Activated CD8-positive, alpha-beta T cell treated with anti-CD3 and anti-CD28 coated beads for 36 hours (primary cell): ENCODE measurements at regions of chr1 and their contacts with region 1.

Region 1: DNA sequence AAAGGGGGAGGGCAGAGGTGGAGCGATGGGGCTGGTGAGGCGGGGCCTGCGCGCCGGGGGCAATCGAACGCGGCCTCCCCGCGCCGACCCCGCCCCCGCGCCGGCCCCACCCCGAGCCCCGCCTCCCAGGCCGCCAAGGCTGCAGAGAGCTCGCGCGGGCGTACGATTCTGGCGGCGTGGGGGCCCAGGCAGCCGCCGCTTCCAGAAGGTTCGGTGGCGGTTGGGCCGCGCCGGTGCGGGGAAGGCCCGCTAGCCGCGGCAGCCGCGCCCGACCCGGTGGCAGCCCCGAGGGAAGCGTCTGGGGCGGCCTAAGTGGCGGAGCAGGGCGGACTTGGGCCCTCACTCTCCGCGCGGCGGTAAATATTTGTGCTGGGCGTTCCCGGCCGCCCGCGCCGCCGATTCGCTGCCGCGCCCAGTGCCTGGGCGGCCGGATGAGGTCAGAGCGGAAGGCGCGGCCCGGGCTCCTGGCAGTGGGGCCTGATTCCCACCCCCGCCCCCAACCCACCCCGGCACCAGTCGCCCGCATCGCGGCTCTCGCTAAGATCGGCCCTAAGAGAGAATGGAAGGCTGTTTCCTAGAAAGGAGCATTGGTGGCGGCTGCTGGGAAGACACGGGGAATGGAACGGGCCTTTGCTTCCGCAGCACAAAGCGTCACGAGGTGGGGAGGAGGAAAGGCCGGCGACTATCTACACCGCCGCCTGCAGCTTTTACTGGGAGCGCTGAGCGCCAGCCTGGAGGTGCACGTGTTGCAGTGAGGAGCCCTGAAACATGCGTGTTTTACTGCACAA is at the start of gene ACOT7:
- DNase-seq: peak; percentile 94
- ATAC-seq: peak; percentile 91
- H3K4me3 Mint-ChIP-seq: peak within 1 kb of the TSS; percentile 84
- H3K27ac Mint-ChIP-seq: peak within 1 kb of the TSS; percentile 95
- H3K4me1 Mint-ChIP-seq: peaks cover 21% of the 10 kb centered on the region
- H3K27me3 Mint-ChIP-seq: no peaks in the 10 kb centered on the region
- CTCF ChIP-seq: no peak
- total RNA-seq, gene ACOT7: 80.4 to 86.7 TPM

Region 2: GRCh38 chr1:6367381-6368012 is 26.1 kb before region 1 on chr1:
- CTCF ChIA-PET with region 1: interaction called, 30 read pairs
- POLR2A ChIA-PET with region 1: interaction called, 13 read pairs
- intact Hi-C with region 1: no loop called
- DNase-seq: no peak
- ATAC-seq: no peak
- H3K4me3 Mint-ChIP-seq: no peak overlapping the region
- H3K27ac Mint-ChIP-seq: no peak overlapping the region
- H3K4me1 Mint-ChIP-seq: peaks cover 24% of the 10 kb centered on the region
- H3K27me3 Mint-ChIP-seq: no peaks in the 10 kb centered on the region
- CTCF ChIP-seq: no peak

Region 3: GRCh38 chr1:6584126-6585080 is 190.8 kb after region 1 on chr1:
- CTCF ChIA-PET with region 1: no interaction called
- POLR2A ChIA-PET with region 1: no interaction called
- intact Hi-C with region 1: no loop called
- DNase-seq: no peak
- ATAC-seq: no peak
- H3K4me3 Mint-ChIP-seq: no peak overlapping the region
- H3K27ac Mint-ChIP-seq: peak overlapping the region; percentile 1
- H3K4me1 Mint-ChIP-seq: peaks cover 35% of the 10 kb centered on the region
- H3K27me3 Mint-ChIP-seq: no peaks in the 10 kb centered on the region
- CTCF ChIP-seq: no peak